ENCODE measurements at regions of chr2 and their contacts with region 1.

Region 1: DNA sequence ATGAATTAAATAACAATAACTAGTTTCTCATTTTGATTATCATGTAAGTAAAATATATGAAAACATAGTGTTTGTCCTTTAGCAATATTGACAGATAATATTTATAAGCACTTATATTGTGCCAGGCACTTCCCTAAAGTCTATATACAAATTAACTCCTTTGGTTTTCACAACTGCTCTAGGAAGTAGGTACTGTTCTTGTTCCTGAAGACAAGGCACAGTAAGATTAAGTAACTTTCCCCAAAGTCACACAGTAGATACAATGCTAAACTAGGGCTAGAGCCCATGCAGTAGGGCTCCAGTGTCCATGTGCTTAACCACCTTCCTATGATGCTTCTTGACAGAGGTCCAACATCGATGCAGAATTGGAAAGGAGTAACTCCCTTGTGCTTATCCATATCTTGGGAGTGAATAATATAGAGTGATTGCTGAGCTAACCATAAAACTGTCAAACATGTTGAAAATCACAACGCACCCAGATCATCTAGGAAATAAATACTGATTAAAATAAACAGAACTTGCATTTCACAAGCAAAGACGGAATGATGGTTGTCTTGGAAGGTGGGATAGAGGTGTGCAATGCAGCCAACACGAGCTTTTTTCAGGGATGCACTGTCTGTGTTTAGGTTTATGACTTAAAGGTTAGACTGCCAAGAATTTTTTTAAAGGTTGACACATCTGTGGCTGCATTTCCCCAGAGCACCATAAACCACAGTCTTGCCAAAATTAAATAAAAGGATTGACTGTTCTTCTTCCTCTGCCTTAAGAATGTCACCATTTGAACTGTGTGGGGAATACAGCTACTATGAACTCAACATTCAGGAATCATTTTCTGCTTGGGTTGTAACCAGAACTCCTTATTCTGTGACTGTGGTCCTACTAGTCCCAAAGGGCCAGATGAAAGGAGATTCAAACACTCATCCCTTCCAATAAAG is 80.8 kb downstream of the ANKRD44 start:
- DNase-seq: peak; percentile 63
- ATAC-seq: peak; percentile 96
- H3K4me3 ChIP-seq: no peak overlapping the region
- H3K27ac ChIP-seq: no peak overlapping the region
- H3K4me1 ChIP-seq: peaks cover 13% of the 10 kb centered on the region
- H3K27me3 ChIP-seq: no peaks in the 10 kb centered on the region
- CTCF ChIP-seq: no peak

Region 2: DNA sequence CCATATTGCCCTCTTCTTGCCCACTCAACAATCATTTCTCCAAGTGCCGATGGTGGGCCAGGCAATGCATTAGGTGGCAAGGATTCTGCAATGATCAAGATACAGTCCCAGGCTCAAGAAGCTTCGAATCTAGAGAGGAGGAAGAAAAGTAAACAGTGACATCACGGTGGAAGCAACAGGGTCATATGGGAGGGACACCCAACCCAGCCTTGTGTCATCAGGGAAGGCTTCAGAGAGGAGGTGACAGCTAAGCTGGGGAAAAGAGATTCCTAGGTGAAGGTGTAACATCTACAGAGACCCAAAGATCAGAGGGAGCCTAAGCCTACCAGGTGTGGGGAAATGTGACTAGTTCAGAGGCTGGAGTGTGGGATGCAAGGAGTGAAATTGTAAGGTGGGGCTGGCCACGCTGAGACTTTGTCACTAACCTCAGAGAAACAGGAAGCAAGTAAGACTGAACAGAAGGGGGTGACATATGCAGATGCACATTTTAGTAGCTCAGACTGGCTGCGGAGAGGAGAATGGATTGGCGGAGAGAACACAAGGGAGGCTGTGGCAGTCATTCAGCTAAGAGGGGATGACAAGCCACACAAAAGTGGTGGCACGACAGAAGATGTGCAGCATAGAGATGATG is 24.1 kb before region 1 on chr2:
- CTCF ChIA-PET with region 1: no interaction called
- POLR2A ChIA-PET with region 1: interaction called, 12 read pairs
- intact Hi-C with region 1: no loop called
- DNase-seq: no peak
- ATAC-seq: no peak
- H3K4me3 ChIP-seq: no peak overlapping the region
- H3K27ac ChIP-seq: no peak overlapping the region
- H3K4me1 ChIP-seq: no peaks in the 10 kb centered on the region
- H3K27me3 ChIP-seq: no peaks in the 10 kb centered on the region
- CTCF ChIP-seq: no peak

Measured in PC-3 (cell line).